BJ (cell line): ENCODE measurements at regions of chr3 and their contacts with region 1.

Region 1: DNA sequence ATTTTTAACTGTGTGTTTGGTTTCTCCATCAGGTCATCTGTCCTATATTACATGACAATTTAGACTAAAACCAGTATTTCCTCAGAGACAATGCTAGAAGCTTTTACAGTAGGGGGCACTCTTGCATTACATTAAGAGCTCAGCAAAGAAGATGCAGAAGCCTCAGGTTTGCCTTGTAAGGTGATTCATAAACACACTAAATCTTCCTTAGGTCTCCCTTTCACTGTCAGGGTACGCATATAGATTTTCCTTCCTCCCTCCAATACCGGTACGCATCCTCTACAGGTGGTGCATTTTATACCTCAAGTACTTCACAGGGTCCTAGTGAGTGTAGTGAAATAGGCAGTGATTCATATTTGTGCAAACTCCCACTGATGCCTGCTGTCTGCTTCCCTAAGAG is 46.5 kb downstream of the CD86 start:
- DNase-seq: no peak
- H3K4me3 ChIP-seq: no peak overlapping the region
- H3K27me3 ChIP-seq: no peaks in the 10 kb centered on the region; the same call in 1 of the 2 replicates
- CTCF ChIP-seq: peak; percentile 48

Region 2: DNA sequence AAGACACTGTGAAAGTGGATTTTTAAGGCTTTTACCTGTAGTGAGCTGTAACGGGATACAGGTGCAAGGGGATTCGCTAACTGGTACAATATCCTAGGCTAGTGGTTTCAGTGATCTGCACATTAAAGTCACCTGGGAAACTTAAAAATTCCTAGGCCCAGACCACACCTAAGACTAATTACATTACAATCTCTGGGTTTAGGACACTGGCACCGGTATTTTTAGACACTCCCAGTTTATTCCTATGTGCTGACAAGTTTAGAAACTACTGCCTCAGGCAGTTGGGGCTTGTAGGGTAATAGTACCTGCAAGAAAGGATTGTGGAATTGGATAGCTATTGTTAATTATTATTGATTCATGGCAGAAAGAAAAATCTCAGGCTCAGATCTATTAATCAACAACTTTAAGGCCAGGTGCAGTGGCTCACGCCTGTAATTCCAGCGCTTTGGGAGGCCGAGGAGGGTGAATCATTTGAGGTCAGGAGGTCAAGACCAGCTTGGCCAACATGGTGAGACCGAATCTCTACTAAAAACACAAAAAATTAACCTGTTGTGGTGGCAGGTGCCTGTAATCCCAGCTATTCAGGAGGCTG is 31.4 kb after region 1 on chr3:
- CTCF ChIA-PET with region 1: no interaction called
- POLR2A ChIA-PET with region 1: no interaction called
- DNase-seq: no peak
- H3K4me3 ChIP-seq: no peak overlapping the region
- H3K27me3 ChIP-seq: no peaks in the 10 kb centered on the region
- CTCF ChIP-seq: no peak

Region 3: GRCh38 chr3:122258757-122259371 is 157.2 kb after region 1 on chr3:
- CTCF ChIA-PET with region 1: interaction called, 14 read pairs
- POLR2A ChIA-PET with region 1: no interaction called
- DNase-seq: no peak
- H3K4me3 ChIP-seq: no peak overlapping the region
- H3K27me3 ChIP-seq: peaks cover 2% of the 10 kb centered on the region; the same call in 1 of the 2 replicates
- CTCF ChIP-seq: peak; percentile 72